ENCODE measurements at regions of chr7 and their contacts with region 1.

Region 1: DNA sequence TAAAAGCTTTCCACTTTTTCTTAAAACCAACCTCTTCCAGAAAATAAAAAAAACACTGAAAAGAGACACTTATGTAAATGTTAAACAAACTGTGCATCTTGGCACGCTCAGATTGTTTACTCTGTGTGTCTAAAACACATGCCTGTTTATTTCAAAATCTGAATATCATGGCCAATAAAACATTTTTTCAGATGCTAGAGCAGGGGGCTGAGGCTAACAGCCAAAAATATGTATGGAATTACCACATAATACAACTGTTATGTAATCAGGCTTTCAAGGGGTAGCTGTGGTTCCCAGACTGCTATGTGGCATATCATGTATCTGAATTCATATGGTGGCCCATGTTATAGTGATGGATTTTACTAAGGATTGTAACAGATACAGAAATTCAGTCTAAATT is 130.4 kb downstream of the HIBADH start:
- DNase-seq: no peak
- H3K4me3 ChIP-seq: no peak overlapping the region
- H3K27ac ChIP-seq: no peak overlapping the region
- H3K4me1 ChIP-seq: no peaks in the 10 kb centered on the region
- H3K27me3 ChIP-seq: no peaks in the 10 kb centered on the region
- CTCF ChIP-seq: no peak

Region 2: DNA sequence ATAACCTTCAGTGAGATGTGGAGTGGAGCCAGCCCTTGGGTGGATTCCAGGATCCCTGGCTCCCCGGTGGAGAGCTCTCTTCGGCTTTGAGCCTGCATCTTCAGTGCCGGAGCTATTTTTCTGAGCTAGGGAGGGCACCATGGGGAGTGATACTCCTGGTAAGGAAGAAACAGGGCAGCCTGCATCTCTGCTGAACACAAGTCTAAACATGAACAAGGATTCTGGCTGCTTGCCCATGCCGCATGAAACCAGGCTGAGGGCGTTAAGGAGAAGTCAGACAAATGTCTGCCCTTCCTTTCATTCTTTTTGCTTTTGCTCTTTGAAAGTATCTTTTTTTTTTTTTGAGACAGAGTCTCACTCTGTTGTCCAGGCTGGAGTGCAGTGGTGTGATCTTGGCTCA is 229.3 kb before region 1 on chr7:
- CTCF ChIA-PET with region 1: no interaction called
- POLR2A ChIA-PET with region 1: no interaction called
- intact Hi-C with region 1: no loop called
- DNase-seq: no peak
- H3K4me3 ChIP-seq: no peak overlapping the region
- H3K27ac ChIP-seq: no peak overlapping the region
- H3K4me1 ChIP-seq: no peaks in the 10 kb centered on the region
- H3K27me3 ChIP-seq: no peaks in the 10 kb centered on the region
- CTCF ChIP-seq: no peak

Region 3: DNA sequence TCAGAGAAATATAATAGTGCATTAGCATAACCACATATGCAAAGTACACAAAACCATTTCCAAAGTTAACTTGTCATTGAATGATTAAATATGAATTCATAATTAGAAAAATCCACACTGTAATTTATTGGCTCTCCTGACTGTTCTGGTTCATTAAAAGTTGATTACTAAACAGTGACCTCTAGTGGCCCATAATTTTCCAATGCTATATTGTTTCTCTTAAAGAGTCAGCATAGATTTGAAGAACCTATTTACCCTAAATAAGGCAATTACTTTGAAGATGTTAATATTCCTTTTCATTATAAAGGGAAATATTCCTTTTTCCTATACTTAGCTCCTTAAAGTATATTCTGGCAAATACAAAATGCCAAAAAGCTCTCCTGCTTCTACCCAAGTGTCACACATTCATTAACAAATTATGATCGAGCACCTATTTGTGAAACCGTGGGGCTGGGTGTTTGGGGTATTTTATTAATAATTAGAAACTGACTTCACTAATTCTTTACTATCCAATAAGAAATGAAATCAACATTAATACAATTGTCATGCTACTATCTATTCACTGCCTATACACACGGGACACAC is 44.1 kb after region 1 on chr7:
- CTCF ChIA-PET with region 1: no interaction called
- POLR2A ChIA-PET with region 1: no interaction called
- intact Hi-C with region 1: no loop called
- DNase-seq: no peak
- H3K4me3 ChIP-seq: no peak overlapping the region
- H3K27ac ChIP-seq: no peak overlapping the region
- H3K4me1 ChIP-seq: no peaks in the 10 kb centered on the region
- H3K27me3 ChIP-seq: no peaks in the 10 kb centered on the region
- CTCF ChIP-seq: peak; percentile 91

Region 4: DNA sequence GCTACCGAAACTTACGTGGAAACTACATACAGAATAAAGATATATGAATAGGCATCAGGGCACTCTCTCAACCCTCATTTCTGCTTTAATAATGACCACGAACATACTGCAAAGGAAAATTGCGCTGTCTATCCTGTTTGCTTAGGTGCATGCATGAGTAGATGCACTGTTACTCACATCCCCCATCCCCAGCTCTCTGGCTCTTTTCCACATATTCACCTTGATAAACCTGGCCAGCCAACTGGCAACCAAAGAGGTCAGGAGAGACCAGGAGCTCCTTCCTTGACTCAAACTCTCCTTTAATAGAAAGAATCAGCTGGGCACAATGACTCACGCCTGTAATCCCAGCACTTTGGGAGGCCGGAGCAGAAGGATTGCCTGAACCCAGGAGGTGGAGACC is 100.7 kb after region 1 on chr7:
- CTCF ChIA-PET with region 1: no interaction called
- POLR2A ChIA-PET with region 1: interaction called, 11 read pairs
- intact Hi-C with region 1: no loop called
- DNase-seq: no peak
- H3K4me3 ChIP-seq: no peak overlapping the region
- H3K27ac ChIP-seq: no peak overlapping the region
- H3K4me1 ChIP-seq: no peaks in the 10 kb centered on the region
- H3K27me3 ChIP-seq: no peaks in the 10 kb centered on the region
- CTCF ChIP-seq: no peak

Region 5: DNA sequence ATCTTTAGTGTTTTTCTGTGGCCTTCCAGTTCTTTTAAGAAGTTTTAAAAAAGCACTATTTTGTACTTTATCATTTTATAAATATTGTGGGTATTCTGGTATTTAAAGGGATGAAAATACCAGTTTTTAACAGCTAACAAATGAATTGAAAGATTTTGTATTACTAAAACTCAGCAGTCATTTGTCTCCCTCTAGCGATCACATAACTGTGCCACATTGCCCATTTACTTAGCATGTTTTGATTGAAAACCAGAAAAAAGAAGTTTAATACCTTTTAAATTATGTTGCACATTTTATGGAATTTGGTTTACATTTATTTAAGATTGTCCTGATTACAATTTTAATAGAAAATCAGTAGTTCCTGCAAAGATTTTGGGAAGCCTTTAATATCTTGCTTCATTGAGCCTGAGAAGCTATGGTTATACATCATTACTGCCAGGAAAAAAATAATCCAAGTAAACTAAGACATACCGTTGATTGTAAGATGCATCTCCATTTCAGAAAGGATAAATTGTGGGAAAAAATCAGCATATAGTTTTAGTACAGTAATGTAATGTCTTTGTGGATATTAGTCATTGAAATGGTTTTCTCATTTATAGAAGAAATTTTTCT is 242.5 kb after region 1 on chr7:
- CTCF ChIA-PET with region 1: no interaction called
- POLR2A ChIA-PET with region 1: no interaction called
- intact Hi-C with region 1: no loop called
- DNase-seq: no peak
- H3K4me3 ChIP-seq: no peak overlapping the region
- H3K27ac ChIP-seq: no peak overlapping the region
- H3K4me1 ChIP-seq: peaks cover 23% of the 10 kb centered on the region
- H3K27me3 ChIP-seq: no peaks in the 10 kb centered on the region
- CTCF ChIP-seq: peak; percentile 88

Measured in PC-9 (cell line).